ENCODE measurements at regions of chr1 and their contacts with region 1.

Region 1: GRCh38 chr1:78839704-78840277 is 166.7 kb downstream of the ADGRL4 start:
- DNase-seq: peak; percentile 69
- H3K4me3 ChIP-seq: no peak overlapping the region
- H3K27ac ChIP-seq: no peak overlapping the region
- H3K4me1 ChIP-seq: peaks cover 2% of the 10 kb centered on the region
- H3K27me3 ChIP-seq: no peaks in the 10 kb centered on the region
- CTCF ChIP-seq: peak; percentile 38 to 42
- POLR2A ChIP-seq: no peak

Region 2: GRCh38 chr1:78536427-78536826 is 303.4 kb before region 1 on chr1:
- CTCF ChIA-PET with region 1: no interaction called
- POLR2A ChIA-PET with region 1: no interaction called
- dilution Hi-C with region 1: no loop called
- intact Hi-C with region 1: no loop called
- DNase-seq: no peak
- H3K4me3 ChIP-seq: no peak overlapping the region
- H3K27ac ChIP-seq: no peak overlapping the region
- H3K4me1 ChIP-seq: no peaks in the 10 kb centered on the region
- H3K27me3 ChIP-seq: peaks cover 0 to 6% of the 10 kb centered on the region in 2 experiments
- CTCF ChIP-seq: no peak
- POLR2A ChIP-seq: no peak

Region 3: GRCh38 chr1:78617615-78618026 is 222.2 kb before region 1 on chr1:
- CTCF ChIA-PET with region 1: interaction called, 17 read pairs
- POLR2A ChIA-PET with region 1: no interaction called
- dilution Hi-C with region 1: no loop called
- intact Hi-C with region 1: loop called (anchors 5 kb)
- DNase-seq: peak; percentile 77
- H3K4me3 ChIP-seq: no peak overlapping the region
- H3K27ac ChIP-seq: no peak overlapping the region
- H3K4me1 ChIP-seq: peaks cover 18% of the 10 kb centered on the region
- H3K27me3 ChIP-seq: no peaks in the 10 kb centered on the region
- CTCF ChIP-seq: peak; percentile 67 to 73
- POLR2A ChIP-seq: no peak

Region 4: DNA sequence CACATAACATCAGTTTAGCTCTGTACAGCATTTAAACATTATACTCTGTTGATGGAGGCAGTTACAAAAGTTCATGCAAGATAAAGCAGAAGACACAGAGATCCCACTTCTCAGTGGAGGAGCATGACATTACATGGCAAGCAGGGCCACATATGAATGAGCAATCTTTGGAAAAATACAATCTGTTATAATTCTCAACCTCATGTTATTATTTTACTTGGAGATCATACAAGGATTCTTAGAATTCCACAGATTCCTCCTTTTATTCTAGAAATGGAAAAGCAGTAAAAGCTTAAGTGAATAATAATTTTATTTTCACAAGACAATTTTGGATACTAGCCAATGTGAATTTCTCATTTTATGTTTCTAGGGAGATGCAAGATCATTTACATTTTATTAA is 123.6 kb before region 1 on chr1:
- CTCF ChIA-PET with region 1: no interaction called
- POLR2A ChIA-PET with region 1: no interaction called
- dilution Hi-C with region 1: no loop called
- intact Hi-C with region 1: loop called (anchors 10 kb)
- DNase-seq: peak; percentile 55
- H3K4me3 ChIP-seq: no peak overlapping the region
- H3K27ac ChIP-seq: no peak overlapping the region
- H3K4me1 ChIP-seq: no peaks in the 10 kb centered on the region
- H3K27me3 ChIP-seq: no peaks in the 10 kb centered on the region
- CTCF ChIP-seq: no peak
- POLR2A ChIP-seq: no peak

Region 5: GRCh38 chr1:78760858-78761257 is 78.9 kb before region 1 on chr1:
- CTCF ChIA-PET with region 1: no interaction called
- POLR2A ChIA-PET with region 1: no interaction called
- dilution Hi-C with region 1: no loop called
- intact Hi-C with region 1: no loop called
- DNase-seq: no peak
- H3K4me3 ChIP-seq: no peak overlapping the region
- H3K27ac ChIP-seq: no peak overlapping the region
- H3K4me1 ChIP-seq: no peaks in the 10 kb centered on the region
- H3K27me3 ChIP-seq: no peaks in the 10 kb centered on the region
- CTCF ChIP-seq: no peak
- POLR2A ChIP-seq: no peak

Region 6: GRCh38 chr1:78797108-78797781 is 42.5 kb before region 1 on chr1:
- CTCF ChIA-PET with region 1: no interaction called
- POLR2A ChIA-PET with region 1: no interaction called
- dilution Hi-C with region 1: no loop called
- intact Hi-C with region 1: no loop called
- DNase-seq: no peak
- H3K4me3 ChIP-seq: no peak overlapping the region
- H3K27ac ChIP-seq: no peak overlapping the region
- H3K4me1 ChIP-seq: no peaks in the 10 kb centered on the region
- H3K27me3 ChIP-seq: no peaks in the 10 kb centered on the region
- CTCF ChIP-seq: no peak
- POLR2A ChIP-seq: no peak

Region 7: DNA sequence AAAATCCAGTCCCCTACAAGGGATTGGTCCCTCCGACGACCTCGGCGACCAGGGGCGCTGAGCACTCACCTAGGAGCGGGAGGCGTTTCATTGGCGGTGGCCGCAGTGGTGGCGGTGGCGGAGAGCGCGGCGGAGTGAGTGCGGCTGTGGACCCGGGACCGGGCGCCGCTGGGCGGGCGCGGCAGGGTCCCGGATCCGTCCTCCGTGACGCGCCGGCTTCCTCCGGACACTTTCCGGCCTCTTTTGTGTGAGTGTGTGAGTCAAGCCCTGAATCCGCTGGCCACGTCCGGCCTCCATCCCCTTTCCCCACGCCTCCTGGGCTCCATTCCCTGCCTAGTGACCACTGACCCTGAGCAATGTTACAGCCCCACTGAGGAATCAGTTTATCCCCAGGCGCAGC is 166.8 kb after region 1 on chr1 and contains the start of gene ADGRL4:
- CTCF ChIA-PET with region 1: interaction called, 4 read pairs
- POLR2A ChIA-PET with region 1: no interaction called
- dilution Hi-C with region 1: no loop called
- intact Hi-C with region 1: loop called (anchors 2 kb)
- DNase-seq: peak; percentile 90
- H3K4me3 ChIP-seq: peak within 1 kb of the TSS; percentile 93 to 99 (median 97)
- H3K27ac ChIP-seq: peak within 1 kb of the TSS; percentile 97
- H3K4me1 ChIP-seq: peaks cover 47% of the 10 kb centered on the region
- H3K27me3 ChIP-seq: no peaks in the 10 kb centered on the region
- CTCF ChIP-seq: no peak
- POLR2A ChIP-seq: peak; percentile 90
- total RNA-seq, gene ADGRL4: 143 and 205 TPM in 2 replicates

Region 8: GRCh38 chr1:79259388-79260336 is 419.9 kb after region 1 on chr1:
- CTCF ChIA-PET with region 1: interaction called, 18 read pairs
- POLR2A ChIA-PET with region 1: no interaction called
- dilution Hi-C with region 1: no loop called
- intact Hi-C with region 1: loop called (anchors 1 kb)
- DNase-seq: peak; percentile 44
- H3K4me3 ChIP-seq: no peak overlapping the region
- H3K27ac ChIP-seq: no peak overlapping the region
- H3K4me1 ChIP-seq: no peaks in the 10 kb centered on the region
- H3K27me3 ChIP-seq: no peaks in the 10 kb centered on the region
- CTCF ChIP-seq: peak; percentile 27 to 42
- POLR2A ChIP-seq: no peak

Region 9: GRCh38 chr1:79388694-79389361 is 549.0 kb after region 1 on chr1:
- CTCF ChIA-PET with region 1: no interaction called
- POLR2A ChIA-PET with region 1: no interaction called
- dilution Hi-C with region 1: no loop called
- intact Hi-C with region 1: no loop called
- DNase-seq: no peak
- H3K4me3 ChIP-seq: no peak overlapping the region
- H3K27ac ChIP-seq: no peak overlapping the region
- H3K4me1 ChIP-seq: no peaks in the 10 kb centered on the region
- H3K27me3 ChIP-seq: no peaks in the 10 kb centered on the region
- CTCF ChIP-seq: no peak
- POLR2A ChIP-seq: no peak

Region 10: DNA sequence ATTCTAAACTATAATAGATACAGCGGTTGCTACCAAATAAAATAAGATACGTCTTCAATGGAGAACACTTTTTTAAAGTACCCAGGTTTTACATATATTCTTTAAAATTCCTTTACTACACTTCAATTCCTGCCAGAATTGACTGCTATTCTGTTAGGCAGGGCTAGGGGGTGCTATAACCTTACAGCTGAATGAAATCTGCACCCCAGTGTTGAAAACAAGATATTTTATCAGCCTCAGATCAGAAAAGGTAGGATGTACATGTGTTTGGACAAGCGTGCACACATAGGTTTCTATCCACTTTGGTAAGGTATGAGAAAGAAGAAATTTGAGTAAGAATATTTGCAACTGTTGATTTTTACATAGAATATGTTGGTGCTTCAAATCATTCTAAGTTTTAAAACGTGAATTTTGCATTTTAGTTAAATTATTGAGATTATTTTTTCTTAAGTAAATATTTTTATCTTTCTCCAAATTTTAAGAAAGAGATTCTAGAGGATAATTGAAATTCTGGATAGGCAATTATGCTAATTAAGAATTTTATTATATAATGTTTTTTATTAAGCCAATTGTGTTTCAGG is 657.5 kb after region 1 on chr1:
- CTCF ChIA-PET with region 1: interaction called, 10 read pairs
- POLR2A ChIA-PET with region 1: no interaction called
- dilution Hi-C with region 1: no loop called
- intact Hi-C with region 1: no loop called
- DNase-seq: peak; percentile 49
- H3K4me3 ChIP-seq: no peak overlapping the region
- H3K27ac ChIP-seq: no peak overlapping the region
- H3K4me1 ChIP-seq: no peaks in the 10 kb centered on the region
- H3K27me3 ChIP-seq: no peaks in the 10 kb centered on the region
- CTCF ChIP-seq: peak; percentile 77 to 81
- POLR2A ChIP-seq: no peak